Transverse colon (tissue), 4 donors: ENCODE measurements at regions of chr1 and their contacts with region 1.

Region 1: GRCh38 chr1:54705153-54705552 is 10.5 kb upstream of the TTC4 start:
- DNase-seq: no peak
- H3K4me3 ChIP-seq: no peak overlapping the region
- H3K27ac ChIP-seq: no peak overlapping the region
- H3K4me1 ChIP-seq: no peaks in the 10 kb centered on the region
- H3K27me3 ChIP-seq: no peaks in the 10 kb centered on the region
- CTCF ChIP-seq: no peak
- EP300 ChIP-seq: no peak
- POLR2A ChIP-seq: no peak

Region 2: GRCh38 chr1:54663725-54664124 is 41.4 kb before region 1 on chr1:
- in situ Hi-C with region 1: no loop called
- intact Hi-C with region 1: loop called (anchors 1 kb)
- DNase-seq: no peak
- H3K4me3 ChIP-seq: no peak overlapping the region
- H3K27ac ChIP-seq: no peak overlapping the region
- H3K4me1 ChIP-seq: no peaks in the 10 kb centered on the region
- H3K27me3 ChIP-seq: no peaks in the 10 kb centered on the region
- CTCF ChIP-seq: no peak
- EP300 ChIP-seq: no peak
- POLR2A ChIP-seq: no peak